ENCODE measurements at regions of chr12 and their contacts with region 1.

Region 1: DNA sequence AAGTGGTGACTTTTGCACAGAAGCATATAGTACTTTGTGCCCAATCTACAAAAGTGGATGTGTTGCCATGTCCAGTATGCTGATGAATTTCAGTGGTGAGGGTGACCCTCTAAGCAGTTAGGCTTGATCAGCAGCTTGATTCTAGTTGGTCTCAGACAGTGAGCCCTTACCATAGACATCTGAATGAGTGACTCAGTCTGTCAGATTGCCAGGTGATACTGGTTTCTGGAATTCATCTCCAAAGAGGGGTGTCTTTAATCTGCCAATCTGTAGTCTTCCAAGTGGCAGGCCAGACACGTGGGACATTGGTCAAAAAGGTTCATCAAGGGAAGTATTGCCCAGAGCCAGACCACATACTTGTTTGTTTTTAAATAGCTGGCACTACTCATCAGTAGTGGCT is 187.4 kb upstream of the SLC16A7 start:
- DNase-seq: no peak
- H3K4me3 Mint-ChIP-seq: no peak overlapping the region
- H3K27ac Mint-ChIP-seq: no peak overlapping the region
- H3K4me1 Mint-ChIP-seq: peaks cover 19% of the 10 kb centered on the region
- H3K27me3 Mint-ChIP-seq: peaks cover 4% of the 10 kb centered on the region

Region 2: DNA sequence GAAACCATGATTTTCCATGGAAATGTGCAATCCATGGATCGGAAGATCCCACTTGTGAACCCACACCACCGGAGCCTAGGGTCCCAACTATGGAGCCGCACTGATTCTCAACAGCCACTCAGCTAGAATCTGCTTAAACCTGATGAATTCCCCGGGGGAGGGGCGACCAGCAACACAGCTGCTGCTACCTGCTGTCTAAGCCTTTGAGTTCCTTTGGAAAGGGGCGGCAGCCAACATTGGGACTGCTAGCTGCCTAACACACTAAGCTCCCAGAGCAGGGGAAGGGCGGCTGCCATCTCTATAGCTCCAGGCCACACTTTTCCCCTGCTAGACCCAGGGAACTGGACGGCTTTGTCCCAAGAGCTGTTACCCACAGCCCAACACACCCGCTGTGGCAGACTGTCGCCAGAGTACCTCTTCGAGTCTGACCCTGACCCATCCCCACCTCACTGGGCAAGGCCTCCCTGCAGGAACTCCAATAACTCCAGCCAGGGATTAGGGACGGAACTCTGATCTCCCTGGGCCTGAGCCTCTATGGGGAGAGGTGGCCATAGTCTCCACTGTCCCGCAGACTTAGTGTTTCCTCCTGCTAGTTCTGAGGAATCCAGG is 18.4 kb before region 1 on chr12:
- intact Hi-C with region 1: loop called (anchors 2 kb)
- DNase-seq: no peak
- H3K4me3 Mint-ChIP-seq: no peak overlapping the region
- H3K27ac Mint-ChIP-seq: no peak overlapping the region
- H3K4me1 Mint-ChIP-seq: peaks cover 6% of the 10 kb centered on the region
- H3K27me3 Mint-ChIP-seq: peaks cover 16% of the 10 kb centered on the region

Region 3: DNA sequence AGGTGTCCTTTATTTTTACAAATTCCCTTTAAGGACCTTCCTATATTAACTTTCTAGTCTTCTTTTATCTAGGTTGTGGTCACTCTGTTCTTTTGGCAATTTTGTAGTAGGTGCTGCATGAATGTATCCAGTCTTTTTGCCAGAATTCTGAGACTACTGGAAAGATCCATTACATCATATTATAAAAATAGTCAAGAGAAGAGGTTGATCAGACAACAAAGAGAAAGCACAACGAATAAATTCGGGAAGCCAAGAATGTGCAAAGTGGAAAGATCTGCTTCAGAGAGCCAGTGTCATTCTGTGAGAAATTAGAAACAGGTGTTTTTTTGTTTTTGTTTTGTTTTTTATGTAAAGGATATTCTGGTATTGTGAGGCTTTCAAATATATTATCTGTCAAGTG is 171.6 kb after region 1 on chr12:
- intact Hi-C with region 1: loop called (anchors 5 kb)
- DNase-seq: no peak
- H3K4me3 Mint-ChIP-seq: no peak overlapping the region
- H3K27ac Mint-ChIP-seq: no peak overlapping the region
- H3K4me1 Mint-ChIP-seq: peaks cover 47% of the 10 kb centered on the region
- H3K27me3 Mint-ChIP-seq: peaks cover 3% of the 10 kb centered on the region